HCT116 (cell line): ENCODE measurements at regions of chr7 and their contacts with region 1.

Region 1: GRCh38 chr7:50418086-50418515 is 32.0 kb downstream of the FIGNL1 start:
- DNase-seq: peak; percentile 76
- ATAC-seq: peak; percentile 100
- H3K4me3 ChIP-seq: no peak overlapping the region
- H3K27ac ChIP-seq: no peak overlapping the region
- H3K4me1 ChIP-seq: no peaks in the 10 kb centered on the region
- H3K27me3 ChIP-seq: no peaks in the 10 kb centered on the region
- CTCF ChIP-seq: peak; percentile 90 to 98 (median 97)
- POLR2A ChIP-seq: no peak
- RAD21 ChIP-seq: peak; percentile 88

Region 2: GRCh38 chr7:50119815-50120637 is 298.1 kb before region 1 on chr7:
- CTCF ChIA-PET with region 1: interaction called, 9 read pairs
- POLR2A ChIA-PET with region 1: no interaction called
- RAD21 ChIA-PET with region 1: no interaction called
- intact Hi-C with region 1: loop called (anchors 5 kb)
- DNase-seq: no peak
- ATAC-seq: peak; percentile 97
- H3K4me3 ChIP-seq: no peak overlapping the region
- H3K27ac ChIP-seq: no peak overlapping the region
- H3K4me1 ChIP-seq: no peaks in the 10 kb centered on the region
- H3K27me3 ChIP-seq: peaks cover 5% of the 10 kb centered on the region; the same call in 1 of the 2 replicates
- CTCF ChIP-seq: peak; percentile 46 to 77 (median 73); a peak in 5 of 6 replicates
- POLR2A ChIP-seq: peak; percentile 84
- RAD21 ChIP-seq: peak; percentile 65

Region 3: GRCh38 chr7:50142425-50143017 is 275.6 kb before region 1 on chr7:
- CTCF ChIA-PET with region 1: interaction called, 7 read pairs
- POLR2A ChIA-PET with region 1: no interaction called
- RAD21 ChIA-PET with region 1: interaction called in 1 of 2 experiments, 4 read pairs
- intact Hi-C with region 1: loop called (anchors 2 kb)
- DNase-seq: peak; percentile 36
- ATAC-seq: peak; percentile 57; the same call in 1 of the 2 replicates
- H3K4me3 ChIP-seq: no peak overlapping the region
- H3K27ac ChIP-seq: no peak overlapping the region
- H3K4me1 ChIP-seq: no peaks in the 10 kb centered on the region
- H3K27me3 ChIP-seq: no peaks in the 10 kb centered on the region
- CTCF ChIP-seq: peak; percentile 52 to 62 (median 57); a peak in 5 of 6 replicates
- POLR2A ChIP-seq: no peak
- RAD21 ChIP-seq: peak; percentile 67

Region 4: GRCh38 chr7:50206453-50207250 is 211.4 kb before region 1 on chr7:
- CTCF ChIA-PET with region 1: interaction called, 27 read pairs
- POLR2A ChIA-PET with region 1: no interaction called
- RAD21 ChIA-PET with region 1: interaction called in 1 of 2 experiments, 3 read pairs
- intact Hi-C with region 1: loop called (anchors 1 kb)
- DNase-seq: peak; percentile 38
- ATAC-seq: peak; percentile 76
- H3K4me3 ChIP-seq: peak overlapping the region in 1 of 2 experiments; percentile 43; a peak in 2 of 4 replicates
- H3K27ac ChIP-seq: no peak overlapping the region; the same call in 1 of the 2 replicates
- H3K4me1 ChIP-seq: peaks cover 18 to 38% of the 10 kb centered on the region in 2 experiments; a peak in 3 of 4 replicates
- H3K27me3 ChIP-seq: no peaks in the 10 kb centered on the region
- CTCF ChIP-seq: no peak
- POLR2A ChIP-seq: no peak
- RAD21 ChIP-seq: no peak